Activated T-helper 2 cell treated with anti-CD3 and anti-CD28 coated beads, Interferon-gamma antibody, Interleukin-2, Interleukin-4, amounts not matched to agents 10 μg/mL and 5 μg/mL and 100 μg/mL, durations not matched to agents 14 hours and 24 hours and 36 hours (primary cell): ENCODE measurements at regions of chr1 and their contacts with region 1.

Region 1: DNA sequence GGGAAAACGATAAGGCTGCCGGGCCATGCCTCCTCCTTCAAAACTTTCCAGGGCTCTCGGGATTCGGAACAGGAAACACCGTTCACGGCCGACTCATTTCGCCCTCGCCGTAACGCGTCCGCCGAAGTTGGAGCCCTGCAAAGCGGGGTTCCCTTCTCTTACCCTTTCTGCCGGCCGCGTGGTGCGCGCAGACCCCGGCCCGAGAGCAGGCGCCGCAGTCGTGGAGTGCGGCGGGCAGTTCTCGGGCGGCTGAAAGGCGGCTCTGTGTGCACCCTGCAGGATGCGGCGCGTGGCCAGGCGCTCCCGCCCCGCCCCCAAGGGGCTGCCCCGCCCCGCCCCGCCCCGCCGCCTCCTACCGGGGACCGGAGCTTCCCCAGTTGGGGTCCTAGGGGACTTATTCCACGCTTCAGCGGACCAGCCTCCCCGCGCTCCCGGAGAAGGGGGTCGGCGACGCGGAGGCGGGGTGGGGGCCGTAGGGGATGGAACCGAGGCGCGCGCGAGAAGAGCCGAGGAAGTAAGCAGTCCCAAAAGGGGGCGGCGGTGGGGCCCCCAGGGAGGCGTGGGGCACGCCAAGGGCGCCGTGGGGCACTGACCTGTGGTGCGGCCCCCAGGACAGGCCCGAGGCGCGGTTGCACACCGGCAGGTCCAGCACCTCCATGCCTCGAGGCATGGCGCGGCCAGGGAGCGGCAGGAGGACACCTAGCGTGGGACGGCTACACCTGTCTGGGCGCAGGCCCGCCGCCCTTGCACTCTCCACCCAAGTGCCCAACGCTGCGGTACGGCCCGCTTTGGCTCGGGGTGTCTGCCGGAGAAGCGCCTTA is at the start of gene MCOLN2:
- DNase-seq: peak; percentile 52
- H3K4me3 Mint-ChIP-seq: peak within 1 kb of the TSS; percentile 94
- H3K27ac Mint-ChIP-seq: peak within 1 kb of the TSS; percentile 93
- H3K4me1 Mint-ChIP-seq: peaks cover 52% of the 10 kb centered on the region
- H3K27me3 Mint-ChIP-seq: peaks cover 28% of the 10 kb centered on the region
- total RNA-seq, gene MCOLN2: 142 and 143 TPM in 2 replicates

Region 2: DNA sequence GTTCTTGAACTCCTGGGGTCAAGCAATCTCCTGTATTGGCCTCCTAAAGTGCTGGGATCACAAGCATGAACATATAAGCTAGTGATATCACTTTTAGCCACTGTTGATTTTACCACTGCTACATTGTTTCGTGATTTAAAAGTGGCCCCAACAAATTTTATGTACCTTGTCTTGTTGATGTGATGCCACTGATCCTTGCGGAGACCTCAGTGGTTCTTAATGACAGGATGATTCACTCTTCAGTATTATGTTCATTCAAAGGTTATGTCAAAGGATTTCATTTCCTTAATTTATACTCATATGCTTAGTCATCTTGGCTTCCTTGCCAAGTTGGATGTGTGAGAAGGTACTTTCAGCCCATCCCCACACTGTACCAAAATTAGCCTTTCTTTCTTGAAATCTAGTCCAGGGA is 840.8 kb before region 1 on chr1:
- intact Hi-C with region 1: loop called (anchors 10 kb)
- DNase-seq: no peak
- H3K4me3 Mint-ChIP-seq: no peak overlapping the region
- H3K27ac Mint-ChIP-seq: no peak overlapping the region
- H3K4me1 Mint-ChIP-seq: peaks cover 57% of the 10 kb centered on the region
- H3K27me3 Mint-ChIP-seq: no peaks in the 10 kb centered on the region

Region 3: DNA sequence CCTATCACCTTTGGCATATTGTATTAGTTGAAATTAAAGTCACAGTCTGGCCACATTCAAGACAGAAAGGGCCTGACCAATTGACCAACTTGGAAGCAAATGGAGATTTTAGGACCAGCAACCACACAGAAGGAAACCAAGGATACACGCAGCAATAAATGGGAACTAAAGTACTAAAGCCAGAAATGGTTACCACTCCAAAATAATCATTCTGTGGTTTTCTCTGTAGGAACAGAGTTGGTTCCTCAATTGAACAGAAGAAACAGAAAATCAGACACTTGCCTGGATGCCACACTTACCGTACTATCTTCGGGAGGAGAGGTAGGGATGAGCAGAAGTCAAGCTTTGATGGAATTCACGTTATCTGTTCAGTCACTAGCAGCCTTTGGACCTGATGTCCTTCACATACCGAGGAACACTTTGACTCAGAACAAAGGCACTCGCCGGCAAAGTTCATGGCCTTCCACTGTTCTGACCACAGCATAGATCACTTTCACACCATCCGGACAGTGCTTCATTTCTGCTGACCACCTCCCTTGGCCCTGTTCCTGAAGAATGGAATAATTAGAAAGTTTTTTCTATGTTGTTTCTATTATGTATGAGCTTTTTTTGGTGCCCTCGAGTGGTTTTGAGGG is 201.0 kb before region 1 on chr1:
- intact Hi-C with region 1: no loop called
- DNase-seq: no peak
- H3K4me3 Mint-ChIP-seq: no peak overlapping the region
- H3K27ac Mint-ChIP-seq: no peak overlapping the region
- H3K4me1 Mint-ChIP-seq: no peaks in the 10 kb centered on the region
- H3K27me3 Mint-ChIP-seq: peaks cover 25% of the 10 kb centered on the region

Region 4: GRCh38 chr1:84944767-84945486 is 52.1 kb before region 1 on chr1:
- intact Hi-C with region 1: loop called (anchors 1 kb)
- DNase-seq: peak; percentile 72
- H3K4me3 Mint-ChIP-seq: peak overlapping the region; percentile 70
- H3K27ac Mint-ChIP-seq: peak overlapping the region; percentile 87
- H3K4me1 Mint-ChIP-seq: peaks cover 32% of the 10 kb centered on the region
- H3K27me3 Mint-ChIP-seq: no peaks in the 10 kb centered on the region

Region 5: GRCh38 chr1:84973498-84974334 is 23.3 kb before region 1 on chr1:
- intact Hi-C with region 1: loop called (anchors 1 kb)
- DNase-seq: no peak
- H3K4me3 Mint-ChIP-seq: peak overlapping the region; percentile 15
- H3K27ac Mint-ChIP-seq: peak overlapping the region; percentile 87
- H3K4me1 Mint-ChIP-seq: peaks cover 79% of the 10 kb centered on the region
- H3K27me3 Mint-ChIP-seq: no peaks in the 10 kb centered on the region

Region 6: GRCh38 chr1:85061711-85062424 is 64.8 kb after region 1 on chr1:
- intact Hi-C with region 1: loop called (anchors 5 kb)
- DNase-seq: peak; percentile 89
- H3K4me3 Mint-ChIP-seq: peak overlapping the region; percentile 79
- H3K27ac Mint-ChIP-seq: peak overlapping the region; percentile 83
- H3K4me1 Mint-ChIP-seq: peaks cover 18% of the 10 kb centered on the region
- H3K27me3 Mint-ChIP-seq: peaks cover 21% of the 10 kb centered on the region